ENCODE measurements at regions of chr17 and their contacts with region 1.

Region 1: GRCh38 chr17:73429440-73430164 is 117.8 kb upstream of the CDC42EP4 start:
- DNase-seq: peak; percentile 85 to 90
- ATAC-seq: peak; percentile 90 to 95 (median 94)
- H3K4me3 ChIP-seq: no peak overlapping the region
- H3K27ac ChIP-seq: no peak overlapping the region
- H3K4me1 ChIP-seq: peaks cover 0 to 15% (median 8%) of the 10 kb centered on the region in 9 donors
- H3K27me3 ChIP-seq: peaks cover 0 to 4% (median 0%) of the 10 kb centered on the region in 7 donors
- CTCF ChIP-seq: peak; percentile 95 to 99 (median 98)

Region 2: DNA sequence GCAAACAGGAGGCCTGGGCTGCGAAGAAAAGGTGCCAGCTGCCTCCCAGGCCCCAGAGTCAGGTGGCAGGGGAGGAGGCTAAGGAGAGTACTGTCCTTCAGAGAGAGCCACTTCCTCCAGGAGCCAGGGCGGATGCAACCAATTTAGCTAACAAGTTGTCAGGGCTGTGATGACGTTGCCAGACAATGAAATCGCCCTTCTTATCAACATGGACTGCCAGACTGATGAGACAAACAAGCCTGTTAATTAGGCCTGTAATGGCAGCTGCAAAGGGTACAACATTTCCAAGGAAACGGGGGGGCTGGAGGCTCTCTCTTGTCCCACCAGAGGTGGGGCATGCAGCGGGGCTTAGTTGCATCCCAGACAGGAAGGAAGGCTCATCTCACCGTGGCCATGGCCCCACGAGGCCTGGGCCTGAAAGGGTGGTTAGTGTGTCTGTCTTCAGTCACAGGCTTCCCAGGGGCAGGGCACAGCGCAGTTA is 102.9 kb after region 1 on chr17:
- intact Hi-C with region 1: loop called in 2 of 10 experiments (anchors 10 kb)
- DNase-seq: no peak
- ATAC-seq: peak in 1 of 8 donors; percentile 17
- H3K4me3 ChIP-seq: no peak overlapping the region
- H3K27ac ChIP-seq: no peak overlapping the region
- H3K4me1 ChIP-seq: peaks cover 0 to 10% (median 0%) of the 10 kb centered on the region in 9 donors
- H3K27me3 ChIP-seq: no peaks in the 10 kb centered on the region
- CTCF ChIP-seq: no peak

Region 3: GRCh38 chr17:73645050-73645978 is 215.7 kb after region 1 on chr17:
- intact Hi-C with region 1: loop called in 9 of 10 experiments (anchors 5 to 10 kb)
- DNase-seq: peak; percentile 31 to 54
- ATAC-seq: peak; percentile 60 to 83 (median 76)
- H3K4me3 ChIP-seq: peak overlapping the region in 9 of 10 donors; percentile 42 to 66 (median 55)
- H3K27ac ChIP-seq: peak overlapping the region in 5 of 10 donors; percentile 1 to 60 (median 40)
- H3K4me1 ChIP-seq: peaks cover 0 to 31% (median 20%) of the 10 kb centered on the region in 9 donors
- H3K27me3 ChIP-seq: peaks cover 0 to 92% (median 70%) of the 10 kb centered on the region in 7 donors
- CTCF ChIP-seq: peak in 5 of 9 donors; percentile 6 to 31 (median 20)

Region 4: DNA sequence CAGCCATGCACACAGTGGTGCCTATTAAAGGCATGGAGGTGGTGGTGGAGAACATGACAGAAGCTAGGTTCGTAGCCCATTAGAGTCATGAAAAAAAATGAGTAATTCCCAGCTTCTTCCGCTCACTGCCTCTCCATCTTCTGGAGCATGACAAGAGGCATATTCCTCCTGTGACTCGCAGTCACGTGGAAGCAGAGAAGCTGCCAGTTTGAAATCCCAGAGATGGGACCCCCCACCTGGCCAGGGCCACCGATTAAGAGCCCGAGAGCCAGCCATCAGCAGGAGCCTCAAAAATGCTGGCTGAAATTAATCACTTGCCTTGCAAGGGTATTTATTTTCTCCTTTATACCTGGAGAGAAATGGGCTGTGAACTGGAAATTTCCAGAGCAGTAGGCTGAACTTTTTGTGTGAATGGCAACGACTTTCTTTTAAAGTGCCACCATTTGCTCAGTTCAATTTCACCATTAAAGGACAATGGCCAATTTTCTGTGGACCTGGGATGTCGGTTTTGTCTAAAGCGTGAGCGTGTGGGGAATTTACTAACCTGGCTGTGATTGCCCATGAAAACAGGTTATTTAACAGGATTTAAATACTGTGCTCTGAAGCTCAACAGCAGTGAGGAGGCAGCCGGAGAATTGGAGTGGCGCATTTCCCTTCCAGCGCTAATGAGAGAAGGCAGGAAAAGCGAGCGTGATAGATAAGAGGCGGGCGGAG is 404.3 kb after region 1 on chr17:
- intact Hi-C with region 1: loop called in 1 of 10 experiments (anchors 10 kb)
- DNase-seq: no peak
- ATAC-seq: no peak
- H3K4me3 ChIP-seq: no peak overlapping the region
- H3K27ac ChIP-seq: no peak overlapping the region
- H3K4me1 ChIP-seq: no peaks in the 10 kb centered on the region
- H3K27me3 ChIP-seq: peaks cover 0 to 50% (median 44%) of the 10 kb centered on the region in 7 donors
- CTCF ChIP-seq: no peak

Region 5: GRCh38 chr17:73956669-73957465 is 527.3 kb after region 1 on chr17:
- intact Hi-C with region 1: loop called in 4 of 10 experiments (anchors 5 to 10 kb)
- DNase-seq: peak; percentile 17 to 41
- ATAC-seq: peak in 3 of 8 donors; percentile 25 to 45 (median 30)
- H3K4me3 ChIP-seq: no peak overlapping the region
- H3K27ac ChIP-seq: no peak overlapping the region
- H3K4me1 ChIP-seq: peaks cover 6 to 12% (median 11%) of the 10 kb centered on the region in 9 donors
- H3K27me3 ChIP-seq: peaks cover 0 to 41% (median 20%) of the 10 kb centered on the region in 7 donors
- CTCF ChIP-seq: peak in 7 of 9 donors; percentile 45 to 58 (median 52)

Measured in heart right ventricle (tissue), 16 donors.